ENCODE measurements at regions of chr11 and their contacts with region 1.

Region 1: DNA sequence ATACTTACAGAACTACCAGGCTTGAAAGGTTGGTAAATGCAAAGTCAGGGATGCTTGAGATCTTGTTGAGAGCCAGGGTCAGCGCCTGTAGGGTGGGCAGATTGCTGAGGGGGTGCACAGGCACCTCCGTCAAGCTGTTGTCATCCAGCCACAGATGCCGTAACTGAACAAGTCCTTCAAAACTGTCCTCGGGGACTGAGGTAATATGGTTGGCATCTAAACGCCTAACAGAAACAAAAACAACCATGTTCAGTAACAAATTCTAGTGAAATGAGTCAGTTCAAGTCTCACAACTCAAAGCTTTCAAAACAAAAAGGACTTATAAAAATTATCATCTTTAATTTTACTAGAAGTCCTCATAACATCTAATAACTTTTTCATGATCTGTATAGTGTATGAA is 22.2 kb upstream of the CCDC34 start:
- DNase-seq: no peak
- H3K4me3 Mint-ChIP-seq: no peak overlapping the region
- H3K27ac Mint-ChIP-seq: no peak overlapping the region
- H3K4me1 Mint-ChIP-seq: peaks cover 38% of the 10 kb centered on the region
- H3K27me3 Mint-ChIP-seq: peaks cover 35% of the 10 kb centered on the region

Region 2: DNA sequence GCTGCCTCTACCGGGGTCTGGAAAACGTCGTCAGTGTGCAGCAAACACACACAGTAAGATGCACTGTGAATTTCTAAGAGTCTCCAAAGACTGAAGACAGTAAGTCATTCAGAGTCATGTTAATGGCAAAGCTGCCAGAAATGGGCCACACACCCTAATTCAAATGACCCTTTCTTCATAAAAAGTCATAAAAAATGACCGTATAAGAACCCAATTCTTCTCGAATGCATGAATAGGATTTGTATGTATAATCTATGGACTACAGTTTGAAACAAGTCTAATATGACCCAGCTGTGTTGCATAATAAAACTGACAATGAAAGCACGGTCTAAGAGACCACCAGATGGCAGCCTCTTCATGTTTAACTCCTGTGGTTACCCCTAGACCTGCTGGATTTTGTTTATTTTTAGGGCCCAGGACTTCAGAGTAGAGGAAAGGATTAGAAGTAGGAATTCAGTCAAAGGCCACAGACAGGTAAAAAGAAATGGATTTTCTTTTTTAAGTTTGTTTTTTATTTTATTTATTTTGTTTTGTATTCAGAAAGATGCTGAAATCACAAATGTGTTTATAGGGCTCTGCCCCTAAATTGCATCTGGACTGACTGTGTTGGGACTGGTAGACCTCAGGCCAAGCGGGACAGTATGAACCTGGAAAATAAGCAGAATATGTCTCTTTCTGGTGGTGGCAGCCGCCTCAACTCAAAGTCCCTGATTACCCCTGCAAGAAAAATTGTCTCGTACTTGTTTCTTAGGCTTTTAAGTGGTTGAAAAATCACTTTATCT is 631.3 kb before region 1 on chr11:
- intact Hi-C with region 1: no loop called
- DNase-seq: no peak
- H3K4me3 Mint-ChIP-seq: no peak overlapping the region
- H3K27ac Mint-ChIP-seq: no peak overlapping the region
- H3K4me1 Mint-ChIP-seq: no peaks in the 10 kb centered on the region
- H3K27me3 Mint-ChIP-seq: no peaks in the 10 kb centered on the region

Region 3: DNA sequence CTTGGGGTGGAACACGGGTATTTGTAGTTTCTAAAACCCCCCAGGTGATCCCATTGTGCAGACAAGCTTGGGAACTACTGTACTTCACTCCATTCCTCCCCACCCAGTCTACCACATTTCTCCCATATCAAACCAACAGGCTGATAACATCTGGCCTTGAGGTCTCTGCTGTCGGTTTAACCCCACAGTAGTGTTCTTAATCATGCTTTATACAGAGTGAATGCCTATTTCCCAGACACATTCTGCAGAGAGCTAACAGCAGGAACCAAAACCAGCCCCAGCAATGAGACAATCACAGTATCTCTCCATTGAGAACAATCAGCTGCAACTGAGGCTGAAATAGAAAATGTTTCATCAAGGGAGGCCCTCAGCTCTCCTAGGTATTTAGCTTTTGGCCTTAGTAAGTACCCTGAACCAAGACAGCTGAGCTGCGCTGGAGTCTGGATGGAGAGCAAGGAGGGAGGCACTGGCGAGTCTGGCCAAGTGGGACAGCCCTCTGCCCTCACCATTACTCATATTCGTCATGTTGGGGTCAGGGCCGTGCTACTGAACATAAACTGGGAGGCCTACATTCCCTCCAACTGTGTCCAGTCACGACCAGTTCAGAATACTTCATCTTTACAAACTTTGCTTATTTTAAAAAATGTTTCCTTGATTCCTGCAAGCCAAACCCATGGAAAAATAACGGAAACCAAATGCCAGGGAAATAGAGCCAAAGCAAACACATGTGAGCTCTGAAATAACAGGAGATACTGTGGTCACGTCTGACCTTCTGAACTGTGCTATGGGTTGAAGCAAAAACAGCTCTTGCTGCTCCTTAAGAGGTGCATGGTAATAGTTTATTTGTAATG is 103.3 kb before region 1 on chr11:
- intact Hi-C with region 1: loop called (anchors 5 kb)
- DNase-seq: no peak
- H3K4me3 Mint-ChIP-seq: no peak overlapping the region
- H3K27ac Mint-ChIP-seq: peak overlapping the region; percentile 2
- H3K4me1 Mint-ChIP-seq: peaks cover 15% of the 10 kb centered on the region
- H3K27me3 Mint-ChIP-seq: peaks cover 23% of the 10 kb centered on the region

Region 4: GRCh38 chr11:27319072-27319471 is 66.2 kb before region 1 on chr11:
- intact Hi-C with region 1: loop called (anchors 5 kb)
- DNase-seq: no peak
- H3K4me3 Mint-ChIP-seq: no peak overlapping the region
- H3K27ac Mint-ChIP-seq: no peak overlapping the region
- H3K4me1 Mint-ChIP-seq: peaks cover 10% of the 10 kb centered on the region
- H3K27me3 Mint-ChIP-seq: peaks cover 18% of the 10 kb centered on the region

Region 5: DNA sequence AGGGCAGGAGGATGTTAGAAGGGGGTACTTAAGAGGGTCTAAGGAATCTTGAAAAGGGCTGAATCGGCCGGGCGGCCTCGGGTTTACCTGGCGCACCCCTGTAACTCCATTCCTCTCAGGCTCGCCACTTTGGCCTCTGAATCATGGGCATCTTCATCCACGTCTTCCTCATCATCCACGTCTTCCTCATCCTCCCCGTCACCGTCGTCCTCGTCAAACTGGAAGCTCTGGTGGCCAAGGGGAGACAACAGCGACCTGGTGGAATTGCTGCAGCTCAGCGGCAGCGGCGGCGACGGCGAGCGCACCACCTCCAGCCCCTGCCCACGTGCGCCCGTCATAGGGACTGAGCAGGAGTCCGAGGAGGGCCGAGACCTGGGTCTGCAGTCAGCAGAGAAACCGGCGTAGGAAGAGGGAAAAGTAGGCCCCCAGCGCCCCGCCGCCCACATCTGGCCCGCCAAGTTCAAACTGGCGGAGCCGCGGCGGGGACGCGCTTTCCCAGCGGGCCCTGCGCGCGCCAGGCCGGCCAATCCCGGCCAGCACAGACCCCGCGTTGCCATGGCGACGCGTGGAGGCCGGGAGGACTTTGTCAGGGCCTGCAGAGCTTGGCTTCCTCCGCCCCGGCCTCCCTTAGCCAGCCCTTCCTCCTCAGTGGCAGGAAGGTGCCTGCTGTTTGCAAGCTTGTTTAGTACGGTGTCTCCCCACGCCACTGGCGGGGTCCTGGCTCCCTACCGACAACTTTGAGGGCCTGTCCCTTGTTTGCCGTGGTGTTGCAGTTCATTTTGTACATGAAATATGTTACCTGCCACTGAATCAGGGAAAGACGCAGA is 22.3 kb before region 1 on chr11 and contains the start of gene CCDC34:
- intact Hi-C with region 1: loop called (anchors 1 kb)
- DNase-seq: peak; percentile 84
- H3K4me3 Mint-ChIP-seq: peak within 1 kb of the TSS; percentile 93
- H3K27ac Mint-ChIP-seq: peak within 1 kb of the TSS; percentile 85
- H3K4me1 Mint-ChIP-seq: peaks cover 21% of the 10 kb centered on the region
- H3K27me3 Mint-ChIP-seq: peaks cover 8% of the 10 kb centered on the region
- total RNA-seq, gene CCDC34: 9.3 and 10.8 TPM in 2 replicates

Region 6: DNA sequence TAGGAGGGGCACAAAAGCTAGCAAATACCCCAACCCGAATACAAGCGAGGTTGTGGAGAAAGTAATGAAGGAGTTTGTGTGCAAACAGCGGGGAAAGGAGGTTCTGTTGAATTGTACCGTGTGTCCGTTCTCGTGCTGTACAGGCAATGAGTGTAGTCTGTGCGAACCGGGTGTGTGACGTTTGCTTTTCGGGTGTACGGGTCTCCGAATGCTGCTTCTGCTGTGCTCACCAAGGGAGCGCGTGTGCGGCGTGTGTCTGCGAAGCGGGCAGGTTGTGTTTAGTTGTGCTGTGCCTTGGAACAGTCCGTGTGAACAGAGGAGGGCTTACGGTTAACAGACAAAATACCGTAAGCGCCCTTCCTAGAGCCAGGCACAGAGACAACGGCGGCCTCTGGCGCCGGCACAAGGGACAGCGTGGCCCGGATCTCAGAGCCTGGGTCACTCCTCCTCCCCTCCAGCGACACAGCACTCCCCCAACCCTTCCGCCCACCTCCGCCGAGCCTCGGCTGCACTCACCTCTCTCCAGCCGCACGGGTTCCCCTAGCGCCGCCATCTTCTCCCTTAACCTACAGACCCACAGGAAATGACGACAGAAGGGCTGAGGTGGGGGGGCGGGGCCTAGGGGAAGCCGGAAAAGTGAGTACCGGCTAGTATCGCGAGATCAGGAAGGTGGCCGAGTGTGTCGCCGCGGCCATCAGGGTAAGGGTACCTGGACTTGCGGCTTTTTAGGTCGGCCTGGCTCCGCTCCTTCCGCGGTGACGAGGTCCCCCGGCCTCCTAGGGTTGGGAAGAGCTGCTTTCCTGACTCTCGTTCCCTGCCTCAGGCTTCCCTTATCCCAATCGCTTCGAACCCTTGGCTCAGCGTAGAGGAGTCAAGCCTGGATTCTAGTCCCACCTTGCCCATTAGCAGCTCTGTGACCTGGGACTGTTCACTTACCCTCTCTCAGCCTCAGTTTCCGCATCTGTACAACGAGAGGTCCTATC is 121.2 kb after region 1 on chr11 and contains the start of gene LIN7C:
- intact Hi-C with region 1: loop called (anchors 1 kb)
- DNase-seq: peak; percentile 83
- H3K4me3 Mint-ChIP-seq: peak within 1 kb of the TSS; percentile 99
- H3K27ac Mint-ChIP-seq: peak within 1 kb of the TSS; percentile 99
- H3K4me1 Mint-ChIP-seq: peaks cover 33% of the 10 kb centered on the region
- H3K27me3 Mint-ChIP-seq: no peaks in the 10 kb centered on the region
- total RNA-seq, gene LIN7C: 29.6 and 31.0 TPM in 2 replicates